Tibial artery (tissue), 4 donors: ENCODE measurements at regions of chr10 and their contacts with region 1.

Region 1: DNA sequence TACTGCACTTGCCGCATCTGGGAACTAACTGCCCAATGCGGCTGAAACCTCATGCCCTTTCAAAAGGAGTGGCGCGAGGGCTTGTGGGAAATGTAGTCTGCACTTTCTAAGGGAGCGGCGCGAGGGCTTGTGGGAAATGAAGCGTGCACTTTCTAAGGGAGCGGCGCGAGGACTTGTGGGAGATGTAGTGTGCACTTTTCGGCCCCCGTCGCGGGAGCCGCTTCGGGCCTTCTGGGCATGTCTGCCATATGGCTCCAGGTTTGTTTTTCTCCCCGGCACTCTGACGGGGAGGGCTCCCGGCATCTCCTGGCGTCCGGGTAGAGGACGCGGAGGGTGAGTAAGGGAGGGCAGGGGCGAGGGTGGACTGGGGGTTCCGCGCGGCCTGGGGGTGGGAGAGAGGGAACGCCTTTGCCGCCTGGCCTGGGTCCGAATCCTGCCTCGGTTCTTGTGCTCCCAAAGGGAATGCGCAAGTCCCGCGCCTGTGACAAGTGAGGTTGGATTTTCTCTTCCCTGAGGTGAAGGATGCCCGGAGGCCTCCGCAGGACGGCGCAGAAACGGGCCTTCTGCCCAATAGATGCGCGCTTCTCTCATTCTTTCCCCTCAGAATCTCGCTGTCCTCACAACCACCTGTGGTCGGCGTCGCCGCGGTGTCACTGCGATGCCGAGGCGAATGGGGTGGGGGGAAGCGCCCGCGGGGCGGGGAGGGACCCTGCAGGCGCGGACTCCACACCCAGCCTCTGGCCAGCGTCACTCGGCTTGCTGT is at the start of gene ZNF37A:
- DNase-seq: peak; percentile 96 to 98
- H3K4me3 ChIP-seq: peak within 1 kb of the TSS; percentile 81 to 89
- H3K27ac ChIP-seq: peak within 1 kb of the TSS; percentile 88 to 92
- H3K4me1 ChIP-seq: peaks cover 0 to 14% (median 6%) of the 10 kb centered on the region in 4 donors
- H3K27me3 ChIP-seq: no peaks in the 10 kb centered on the region
- CTCF ChIP-seq: no peak

Region 2: DNA sequence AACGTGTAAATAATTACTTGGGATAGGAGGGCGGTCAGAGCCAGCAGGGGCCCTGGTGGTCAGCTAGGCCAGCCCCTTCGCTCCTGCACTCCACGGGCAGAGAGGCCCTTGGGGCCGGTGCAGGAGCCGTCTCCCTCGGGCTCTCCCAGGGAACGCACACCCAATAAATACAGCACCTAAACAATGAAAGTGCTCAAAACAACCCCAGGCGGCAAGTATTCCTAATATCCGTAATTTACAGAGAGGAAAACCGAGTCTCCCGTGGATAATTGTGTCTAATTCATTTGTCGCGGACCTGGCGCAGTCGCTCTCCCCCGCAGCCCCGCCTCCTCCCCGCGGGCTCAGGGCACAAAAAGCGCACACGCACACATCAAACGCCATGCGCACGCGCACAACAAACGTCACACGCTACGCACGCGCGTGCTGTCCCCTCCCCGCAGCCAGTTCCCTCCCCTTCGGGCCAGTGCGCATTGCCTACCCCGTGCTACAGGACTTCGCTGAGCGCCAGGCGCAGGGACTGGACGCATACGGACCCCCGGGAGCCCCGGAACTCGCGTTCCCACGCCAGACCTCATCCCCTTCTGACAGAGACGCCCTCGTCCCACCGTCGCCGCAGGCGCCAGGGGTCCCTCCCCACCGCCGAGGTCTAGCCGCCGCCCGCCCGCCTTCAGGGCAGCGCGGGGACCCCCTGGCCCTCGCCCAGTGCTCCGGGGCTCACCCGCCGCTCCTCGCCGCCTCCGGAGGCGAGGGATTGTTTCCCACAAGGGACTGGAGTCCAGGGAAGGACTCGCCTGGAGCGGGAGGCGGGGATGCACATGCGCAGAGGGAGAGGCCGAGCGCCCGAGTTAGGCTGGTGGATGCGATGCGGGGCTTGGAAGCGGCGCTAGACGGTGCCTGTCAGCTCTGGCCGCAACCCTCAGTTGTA is 236.8 kb before region 1 on chr10 and contains the start of gene ZNF248:
- intact Hi-C with region 1: loop called (anchors 10 kb)
- DNase-seq: peak; percentile 96 to 98
- H3K4me3 ChIP-seq: peak within 1 kb of the TSS; percentile 74 to 93
- H3K27ac ChIP-seq: peak within 1 kb of the TSS; percentile 97 to 100
- H3K4me1 ChIP-seq: peaks cover 0 to 29% (median 8%) of the 10 kb centered on the region in 4 donors
- H3K27me3 ChIP-seq: no peaks in the 10 kb centered on the region
- CTCF ChIP-seq: no peak

Region 3: GRCh38 chr10:37976091-37976879 is 118.1 kb before region 1 on chr10 and contains the start of gene ZNF25:
- intact Hi-C with region 1: loop called (anchors 1 kb)
- DNase-seq: peak; percentile 99
- H3K4me3 ChIP-seq: peak within 1 kb of the TSS; percentile 78 to 93
- H3K27ac ChIP-seq: peak within 1 kb of the TSS; percentile 98 to 99
- H3K4me1 ChIP-seq: peaks cover 0 to 16% (median 8%) of the 10 kb centered on the region in 4 donors
- H3K27me3 ChIP-seq: no peaks in the 10 kb centered on the region
- CTCF ChIP-seq: peak; percentile 90 to 92

Region 4: DNA sequence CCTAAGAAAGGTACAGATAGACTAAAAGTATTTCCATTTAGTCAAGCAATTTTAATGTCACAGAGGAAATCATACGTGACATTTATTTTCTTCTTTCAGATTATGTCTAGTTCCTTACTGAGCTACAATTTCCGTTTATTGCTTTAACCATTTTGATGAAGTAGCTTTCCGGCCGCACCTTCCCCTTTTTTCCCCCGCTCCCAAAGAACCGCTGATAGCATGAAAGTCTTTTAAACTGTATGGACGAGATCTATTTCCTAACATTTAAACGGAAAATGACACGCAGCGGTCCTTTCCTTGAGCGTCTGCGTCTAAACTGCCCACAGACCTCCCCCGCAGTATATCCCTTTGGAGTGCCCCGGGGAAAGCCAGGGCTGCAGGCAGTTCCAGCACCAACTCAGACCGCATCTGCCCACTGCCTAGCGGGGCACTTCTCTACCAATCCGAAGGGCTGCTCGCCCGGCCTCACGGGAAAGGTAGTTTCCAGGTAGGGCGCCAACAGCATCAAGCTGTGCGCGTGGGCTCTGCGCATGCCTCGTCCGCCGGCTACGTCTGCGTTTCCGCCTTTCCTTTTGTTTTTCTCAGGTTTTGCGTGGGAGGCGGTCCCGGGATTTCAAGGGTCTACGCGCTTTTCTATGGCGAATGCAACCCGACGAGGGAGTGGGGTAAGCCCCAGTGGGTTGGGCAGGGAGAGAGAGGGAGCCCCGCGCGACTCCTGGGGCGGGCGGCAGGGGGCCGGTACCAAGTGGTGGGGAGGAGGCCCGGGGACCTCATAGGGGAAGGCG is 84.0 kb before region 1 on chr10 and contains the start of gene ZNF33A:
- intact Hi-C with region 1: loop called (anchors 2 kb)
- DNase-seq: peak; percentile 90 to 96
- H3K4me3 ChIP-seq: peak within 1 kb of the TSS; percentile 76 to 84
- H3K27ac ChIP-seq: peak within 1 kb of the TSS; percentile 97 to 99
- H3K4me1 ChIP-seq: peaks cover 0 to 13% (median 6%) of the 10 kb centered on the region in 4 donors
- H3K27me3 ChIP-seq: no peaks in the 10 kb centered on the region
- CTCF ChIP-seq: no peak